Activated CD4-positive, alpha-beta memory T cell treated with anti-CD3 and anti-CD28 coated beads for 36 hours (primary cell): ENCODE measurements at regions of chr21 and their contacts with region 1.

Region 1: DNA sequence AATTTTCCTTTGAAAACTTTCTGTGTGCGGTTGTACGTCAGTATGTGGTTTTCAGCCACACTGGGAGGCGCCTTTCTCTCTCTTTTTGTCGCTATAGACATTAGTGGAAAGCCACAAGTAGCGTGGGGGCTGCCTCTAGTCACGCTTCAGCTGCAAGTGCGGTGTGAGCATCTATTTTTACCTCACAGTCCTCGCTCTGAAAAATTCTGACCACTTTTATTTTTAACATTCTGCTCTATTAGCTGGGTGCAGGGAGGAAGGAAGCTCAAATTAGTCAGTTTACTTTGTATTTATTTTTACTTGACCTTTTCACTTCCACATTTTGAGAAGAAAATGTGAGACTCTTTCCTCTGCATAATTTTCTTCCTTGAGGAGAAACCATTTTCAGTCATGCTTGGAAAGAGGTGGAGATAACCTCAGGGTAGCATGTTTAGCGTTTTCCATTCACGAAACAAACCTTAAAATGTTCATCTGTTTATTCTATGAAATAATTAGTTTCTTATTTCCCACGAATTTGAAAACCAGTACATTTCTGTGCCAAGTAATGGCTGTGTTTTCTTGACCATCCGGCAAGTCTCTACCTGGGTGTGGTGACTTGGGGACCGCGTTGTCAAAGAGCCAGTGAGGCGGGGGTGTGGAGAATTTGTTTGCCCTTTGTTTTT is 35.6 kb downstream of the ADARB1 start:
- DNase-seq: peak; percentile 63
- H3K4me3 Mint-ChIP-seq: peak overlapping the region; percentile 61
- H3K27ac Mint-ChIP-seq: peak overlapping the region; percentile 25
- H3K4me1 Mint-ChIP-seq: peaks cover 61% of the 10 kb centered on the region
- H3K27me3 Mint-ChIP-seq: no peaks in the 10 kb centered on the region

Region 2: GRCh38 chr21:45087022-45087823 is 22.7 kb before region 1 on chr21:
- CTCF ChIA-PET with region 1: interaction called, 5 read pairs
- POLR2A ChIA-PET with region 1: no interaction called
- intact Hi-C with region 1: loop called (anchors 2 kb)
- DNase-seq: peak; percentile 54
- H3K4me3 Mint-ChIP-seq: peak overlapping the region; percentile 20
- H3K27ac Mint-ChIP-seq: peak overlapping the region; percentile 64
- H3K4me1 Mint-ChIP-seq: peaks cover 83% of the 10 kb centered on the region
- H3K27me3 Mint-ChIP-seq: no peaks in the 10 kb centered on the region